Dendritic cell treated with granulocyte-macrophage colony-stimulating factor and Interleukin-4, amounts not matched to agents 40 ng/mL and 50 ng/mL, for 4 days (primary cell): ENCODE measurements at regions of chr12 and their contacts with region 1.

Region 1: GRCh38 chr12:82685790-82686167 is 927 bp upstream of the TMTC2 start:
- H3K4me3 Mint-ChIP-seq: peak overlapping the region; percentile 97
- H3K27ac Mint-ChIP-seq: peak overlapping the region; percentile 94
- H3K4me1 Mint-ChIP-seq: peaks cover 45% of the 10 kb centered on the region
- H3K27me3 Mint-ChIP-seq: no peaks in the 10 kb centered on the region

Region 2: GRCh38 chr12:82358200-82359114 is 327.3 kb before region 1 on chr12 and contains the starts of genes CCDC59 and METTL25:
- intact Hi-C with region 1: loop called (anchors 5 kb)
- H3K4me3 Mint-ChIP-seq: peak within 1 kb of the TSS; percentile 91
- H3K27ac Mint-ChIP-seq: peak within 1 kb of the TSS; percentile 95
- H3K4me1 Mint-ChIP-seq: peaks cover 49% of the 10 kb centered on the region
- H3K27me3 Mint-ChIP-seq: no peaks in the 10 kb centered on the region

Region 3: GRCh38 chr12:82805812-82806497 is 120.2 kb after region 1 on chr12:
- intact Hi-C with region 1: no loop called
- H3K4me3 Mint-ChIP-seq: no peak overlapping the region
- H3K27ac Mint-ChIP-seq: no peak overlapping the region
- H3K4me1 Mint-ChIP-seq: peaks cover 13% of the 10 kb centered on the region
- H3K27me3 Mint-ChIP-seq: no peaks in the 10 kb centered on the region

Region 4: GRCh38 chr12:82835217-82835616 is 149.4 kb after region 1 on chr12:
- intact Hi-C with region 1: loop called (anchors 10 kb)
- H3K4me3 Mint-ChIP-seq: no peak overlapping the region
- H3K27ac Mint-ChIP-seq: no peak overlapping the region
- H3K4me1 Mint-ChIP-seq: peaks cover 24% of the 10 kb centered on the region
- H3K27me3 Mint-ChIP-seq: no peaks in the 10 kb centered on the region

Region 5: GRCh38 chr12:82964446-82964845 is 278.7 kb after region 1 on chr12:
- intact Hi-C with region 1: loop called (anchors 10 kb)
- H3K4me3 Mint-ChIP-seq: no peak overlapping the region
- H3K27ac Mint-ChIP-seq: no peak overlapping the region
- H3K4me1 Mint-ChIP-seq: peaks cover 12% of the 10 kb centered on the region
- H3K27me3 Mint-ChIP-seq: no peaks in the 10 kb centered on the region

Region 6: DNA sequence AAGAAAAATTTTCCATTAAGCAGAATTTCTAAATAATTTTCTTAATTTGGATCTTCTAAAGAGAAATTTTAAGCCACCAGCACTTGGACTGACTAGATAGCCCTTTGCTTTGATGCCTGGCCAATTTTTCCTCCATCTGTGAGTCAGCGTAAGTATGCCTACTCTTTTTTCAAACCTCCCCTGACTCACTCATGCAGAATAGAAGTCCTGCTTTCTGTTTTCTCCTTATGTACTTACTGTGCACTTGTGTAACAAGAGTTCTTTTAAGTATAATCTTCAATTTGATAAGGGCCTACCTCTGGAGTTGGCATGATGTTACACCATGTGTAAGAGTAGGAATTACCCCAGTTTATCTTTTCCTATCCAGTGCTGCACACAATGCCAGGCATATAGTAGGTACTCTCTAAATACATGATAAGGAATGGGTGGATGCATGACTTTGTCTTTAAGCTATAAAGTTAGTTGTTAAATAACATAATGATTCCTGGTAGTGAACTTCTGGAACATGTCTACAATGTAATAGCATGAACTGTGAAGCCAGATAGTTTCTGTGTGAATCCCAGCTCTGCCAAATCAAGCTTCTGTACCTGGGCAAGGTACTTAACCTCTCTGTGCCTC is 330.5 kb after region 1 on chr12:
- intact Hi-C with region 1: no loop called
- H3K4me3 Mint-ChIP-seq: no peak overlapping the region
- H3K27ac Mint-ChIP-seq: no peak overlapping the region
- H3K4me1 Mint-ChIP-seq: peaks cover 12% of the 10 kb centered on the region
- H3K27me3 Mint-ChIP-seq: no peaks in the 10 kb centered on the region

Region 7: GRCh38 chr12:83389237-83389996 is 703.6 kb after region 1 on chr12:
- intact Hi-C with region 1: loop called (anchors 5 kb)
- H3K4me3 Mint-ChIP-seq: no peak overlapping the region
- H3K27ac Mint-ChIP-seq: no peak overlapping the region
- H3K4me1 Mint-ChIP-seq: no peaks in the 10 kb centered on the region
- H3K27me3 Mint-ChIP-seq: no peaks in the 10 kb centered on the region

Region 8: DNA sequence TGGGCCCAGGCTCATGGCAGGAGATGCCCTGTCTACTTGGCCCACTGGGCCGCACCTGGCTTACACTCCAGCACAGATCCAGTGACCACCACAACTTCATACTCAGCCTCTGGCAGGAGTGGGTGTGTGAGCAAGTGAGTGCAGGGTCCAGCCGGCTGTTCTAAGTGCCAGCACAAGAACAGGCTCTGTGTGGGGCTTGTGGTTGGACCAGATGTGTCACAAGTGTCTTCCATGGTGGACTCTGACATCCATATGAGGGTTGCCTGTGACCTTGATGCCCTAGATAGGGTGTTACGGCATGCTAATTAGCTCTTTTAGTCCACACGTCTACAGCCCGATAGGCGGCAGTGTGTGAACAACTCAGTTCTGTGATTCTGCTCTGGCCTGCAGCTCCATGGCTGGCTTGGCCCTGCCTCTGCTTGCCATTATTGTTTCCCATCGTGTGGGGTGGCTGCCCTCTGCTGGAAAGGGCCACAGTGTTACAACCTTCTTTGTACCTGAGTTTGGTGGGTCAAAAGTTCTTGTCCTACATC is 1137.7 kb after region 1 on chr12:
- intact Hi-C with region 1: loop called (anchors 10 kb)
- H3K4me3 Mint-ChIP-seq: no peak overlapping the region
- H3K27ac Mint-ChIP-seq: no peak overlapping the region
- H3K4me1 Mint-ChIP-seq: no peaks in the 10 kb centered on the region
- H3K27me3 Mint-ChIP-seq: no peaks in the 10 kb centered on the region